B cell (primary cell): ENCODE measurements at regions of chr14 and their contacts with region 1.

Region 1: GRCh38 chr14:22713631-22713950 is 52.9 kb upstream of the OXA1L start:
- DNase-seq: no peak
- ATAC-seq: no peak
- H3K4me3 ChIP-seq: peak overlapping the region in 4 of 5 experiments; percentile 23 to 53 (median 45)
- H3K4me3 Mint-ChIP-seq: peak overlapping the region; percentile 90
- H3K27ac ChIP-seq: no peak overlapping the region
- H3K27ac Mint-ChIP-seq: no peak overlapping the region
- H3K4me1 ChIP-seq: peaks cover 5 to 6% of the 10 kb centered on the region in 2 donors
- H3K4me1 Mint-ChIP-seq: peaks cover 11% of the 10 kb centered on the region
- H3K27me3 ChIP-seq: peaks cover 0 to 21% (median 14%) of the 10 kb centered on the region in 4 experiments
- H3K27me3 Mint-ChIP-seq: peaks cover 33% of the 10 kb centered on the region
- CTCF ChIP-seq: no peak

Region 2: DNA sequence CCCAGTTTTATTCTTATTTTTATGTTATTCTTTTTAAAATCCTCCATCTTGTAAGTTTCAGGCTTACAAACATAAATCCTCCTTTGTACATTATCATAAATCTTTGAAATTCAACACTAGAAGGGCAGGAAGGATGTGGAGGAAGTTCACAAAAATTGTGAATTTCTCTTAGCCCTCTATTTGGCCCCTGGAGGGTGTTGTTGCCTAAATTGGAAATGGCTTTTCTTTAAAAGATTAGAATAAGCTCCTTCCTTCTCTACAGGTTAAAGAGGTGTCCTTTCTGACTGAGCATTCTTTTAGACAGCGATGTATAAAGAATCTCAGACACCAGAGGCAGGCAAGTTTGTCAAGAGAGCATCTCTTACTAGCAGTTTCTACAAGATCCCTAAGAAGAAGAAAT is 648.2 kb before region 1 on chr14:
- CTCF ChIA-PET with region 1: no interaction called
- POLR2A ChIA-PET with region 1: no interaction called
- intact Hi-C with region 1: no loop called
- DNase-seq: no peak
- ATAC-seq: no peak
- H3K4me3 ChIP-seq: no peak overlapping the region
- H3K4me3 Mint-ChIP-seq: no peak overlapping the region
- H3K27ac ChIP-seq: no peak overlapping the region
- H3K27ac Mint-ChIP-seq: no peak overlapping the region
- H3K4me1 ChIP-seq: peaks cover 7 to 15% of the 10 kb centered on the region in 2 donors
- H3K4me1 Mint-ChIP-seq: peaks cover 8% of the 10 kb centered on the region
- H3K27me3 ChIP-seq: peaks cover 0 to 34% (median 30%) of the 10 kb centered on the region in 4 experiments
- H3K27me3 Mint-ChIP-seq: peaks cover 63% of the 10 kb centered on the region
- CTCF ChIP-seq: no peak

Region 3: DNA sequence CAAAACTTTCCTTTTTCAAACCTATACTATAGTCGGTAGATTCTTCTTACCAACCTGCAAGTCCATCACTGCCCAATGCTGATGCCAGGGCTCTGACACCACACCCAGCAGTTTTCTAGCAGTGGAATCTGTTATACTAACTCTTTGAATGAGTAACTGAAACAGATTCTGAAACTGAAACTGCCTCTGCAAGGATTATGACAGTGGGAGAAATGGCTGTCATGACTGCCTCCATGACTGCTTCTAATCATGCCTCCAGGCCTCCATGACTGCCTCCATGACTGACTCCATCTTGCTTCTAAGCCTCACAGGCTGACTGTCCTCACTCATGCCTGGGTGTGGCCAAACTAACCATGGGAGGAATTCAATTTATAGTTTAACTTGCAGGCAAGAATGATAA is 23.5 kb after region 1 on chr14:
- CTCF ChIA-PET with region 1: no interaction called
- POLR2A ChIA-PET with region 1: no interaction called
- intact Hi-C with region 1: no loop called
- DNase-seq: no peak
- ATAC-seq: no peak
- H3K4me3 ChIP-seq: no peak overlapping the region
- H3K4me3 Mint-ChIP-seq: no peak overlapping the region
- H3K27ac ChIP-seq: no peak overlapping the region
- H3K27ac Mint-ChIP-seq: no peak overlapping the region
- H3K4me1 ChIP-seq: no peaks in the 10 kb centered on the region
- H3K4me1 Mint-ChIP-seq: peaks cover 5% of the 10 kb centered on the region
- H3K27me3 ChIP-seq: no peaks in the 10 kb centered on the region
- H3K27me3 Mint-ChIP-seq: peaks cover 3% of the 10 kb centered on the region
- CTCF ChIP-seq: no peak

Region 4: DNA sequence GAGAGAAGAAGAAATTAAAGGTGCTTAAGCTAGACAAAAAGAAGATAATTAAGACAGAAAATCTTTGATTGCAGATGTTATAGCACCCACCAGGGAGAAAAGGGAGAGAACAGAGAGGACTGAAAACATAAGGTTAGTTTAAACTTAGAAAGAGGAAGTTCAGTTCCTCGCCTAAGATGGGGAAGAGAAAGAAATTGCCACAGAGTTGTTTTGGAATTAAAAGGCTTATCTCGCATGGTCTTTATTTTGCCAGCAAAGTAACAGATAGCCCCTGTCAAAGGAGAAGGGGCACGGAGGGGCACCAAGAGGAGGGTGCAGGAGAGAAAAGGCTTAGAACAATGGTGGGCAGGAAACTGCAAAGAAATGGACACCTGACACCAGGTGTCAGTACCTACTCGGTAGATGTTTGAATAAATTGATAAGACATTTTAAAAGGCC is 35.1 kb after region 1 on chr14:
- CTCF ChIA-PET with region 1: no interaction called
- POLR2A ChIA-PET with region 1: no interaction called
- intact Hi-C with region 1: loop called (anchors 2 kb)
- DNase-seq: peak; percentile 71
- ATAC-seq: peak; percentile 80
- H3K4me3 ChIP-seq: peak overlapping the region in 4 of 5 experiments; percentile 8 to 58 (median 32)
- H3K4me3 Mint-ChIP-seq: peak overlapping the region; percentile 80
- H3K27ac ChIP-seq: peak overlapping the region; percentile 70 to 75
- H3K27ac Mint-ChIP-seq: peak overlapping the region; percentile 99
- H3K4me1 ChIP-seq: peaks cover 15 to 17% of the 10 kb centered on the region in 2 donors
- H3K4me1 Mint-ChIP-seq: peaks cover 20% of the 10 kb centered on the region
- H3K27me3 ChIP-seq: no peaks in the 10 kb centered on the region
- H3K27me3 Mint-ChIP-seq: no peaks in the 10 kb centered on the region
- CTCF ChIP-seq: peak; percentile 49